Activated CD4-positive, alpha-beta T cell treated with anti-CD3 and anti-CD28 coated beads for 36 hours (primary cell): ENCODE measurements at regions of chr10 and their contacts with region 1.

Region 1: GRCh38 chr10:62816331-62817120 is at the start of gene EGR2:
- DNase-seq: peak; percentile 96
- ATAC-seq: peak; percentile 77
- H3K4me3 Mint-ChIP-seq: peak within 1 kb of the TSS; percentile 99
- H3K27ac Mint-ChIP-seq: peak within 1 kb of the TSS; percentile 99
- H3K4me1 Mint-ChIP-seq: peaks cover 46% of the 10 kb centered on the region
- H3K27me3 Mint-ChIP-seq: peaks cover 19% of the 10 kb centered on the region
- total RNA-seq, gene EGR2: 46.0 to 53.9 TPM

Region 2: GRCh38 chr10:61943674-61944410 is 872.7 kb before region 1 on chr10:
- CTCF ChIA-PET with region 1: no interaction called
- POLR2A ChIA-PET with region 1: no interaction called
- intact Hi-C with region 1: loop called in 1 of 2 experiments (anchors 1 kb)
- DNase-seq: peak; percentile 51
- ATAC-seq: peak; percentile 78
- H3K4me3 Mint-ChIP-seq: peak overlapping the region; percentile 59
- H3K27ac Mint-ChIP-seq: peak overlapping the region; percentile 98
- H3K4me1 Mint-ChIP-seq: peaks cover 71% of the 10 kb centered on the region
- H3K27me3 Mint-ChIP-seq: no peaks in the 10 kb centered on the region

Region 3: DNA sequence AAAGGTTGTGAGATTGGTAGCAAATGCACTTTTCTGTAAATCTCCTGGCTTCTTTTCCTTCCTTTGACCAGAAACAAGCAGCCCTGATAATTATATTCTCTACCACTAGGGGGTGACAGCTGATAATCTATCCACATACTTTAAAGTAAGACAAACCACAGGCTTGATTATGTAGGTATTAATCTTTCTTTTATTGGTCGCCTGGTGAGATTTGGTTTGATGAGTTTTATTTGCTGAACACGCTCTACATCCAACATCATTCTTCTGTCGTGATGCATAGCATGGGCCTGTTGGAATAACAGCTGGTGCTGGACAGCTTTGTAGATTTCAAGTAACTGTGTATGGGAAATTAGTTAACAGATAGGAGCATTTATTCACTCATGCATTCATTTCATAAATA is 378.8 kb before region 1 on chr10:
- CTCF ChIA-PET with region 1: interaction called, 3 read pairs
- POLR2A ChIA-PET with region 1: no interaction called
- intact Hi-C with region 1: loop called (anchors 2 to 5 kb)
- DNase-seq: no peak
- ATAC-seq: no peak
- H3K4me3 Mint-ChIP-seq: no peak overlapping the region
- H3K27ac Mint-ChIP-seq: no peak overlapping the region
- H3K4me1 Mint-ChIP-seq: peaks cover 19% of the 10 kb centered on the region
- H3K27me3 Mint-ChIP-seq: peaks cover 20% of the 10 kb centered on the region

Region 4: DNA sequence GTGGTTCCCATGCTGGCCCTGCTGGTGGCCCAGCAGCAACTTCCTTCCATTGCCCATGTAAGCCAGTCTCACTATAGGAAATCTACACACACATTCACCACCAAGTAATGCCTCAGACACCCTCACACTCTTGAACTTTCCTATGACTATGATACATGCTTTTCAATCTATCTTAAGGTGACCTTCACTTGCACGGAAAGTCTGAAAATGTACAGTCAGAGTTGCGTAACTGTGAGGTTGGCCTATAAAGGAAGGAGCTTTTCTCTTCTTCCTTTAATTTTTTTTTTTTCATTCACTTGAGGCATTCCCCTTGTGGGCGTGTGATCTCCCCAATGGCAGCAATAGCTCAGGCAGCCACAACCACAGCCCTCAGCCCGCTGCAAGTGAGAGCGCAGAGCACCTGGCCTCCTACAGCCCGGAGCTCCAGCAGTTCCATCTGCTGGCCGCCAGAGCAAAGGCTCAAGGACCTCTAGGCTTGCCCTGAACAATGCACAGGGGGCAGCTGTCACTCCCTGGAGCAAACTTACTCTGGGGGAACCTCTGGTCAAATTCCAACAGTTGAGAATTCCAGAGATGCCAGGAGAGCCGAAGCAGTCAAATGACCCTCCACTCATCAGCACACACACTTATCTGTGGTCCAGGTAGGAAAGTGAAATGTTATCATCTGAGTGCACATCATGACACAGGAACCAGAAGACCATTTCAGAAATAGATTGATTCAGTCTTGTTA is 135.2 kb before region 1 on chr10:
- CTCF ChIA-PET with region 1: interaction called, 21 read pairs
- POLR2A ChIA-PET with region 1: interaction called, 11 read pairs
- intact Hi-C with region 1: loop called (anchors 1 kb)
- DNase-seq: peak; percentile 94
- ATAC-seq: peak; percentile 94
- H3K4me3 Mint-ChIP-seq: peak overlapping the region; percentile 11
- H3K27ac Mint-ChIP-seq: peak overlapping the region; percentile 86
- H3K4me1 Mint-ChIP-seq: peaks cover 34% of the 10 kb centered on the region
- H3K27me3 Mint-ChIP-seq: peaks cover 7% of the 10 kb centered on the region

Region 5: DNA sequence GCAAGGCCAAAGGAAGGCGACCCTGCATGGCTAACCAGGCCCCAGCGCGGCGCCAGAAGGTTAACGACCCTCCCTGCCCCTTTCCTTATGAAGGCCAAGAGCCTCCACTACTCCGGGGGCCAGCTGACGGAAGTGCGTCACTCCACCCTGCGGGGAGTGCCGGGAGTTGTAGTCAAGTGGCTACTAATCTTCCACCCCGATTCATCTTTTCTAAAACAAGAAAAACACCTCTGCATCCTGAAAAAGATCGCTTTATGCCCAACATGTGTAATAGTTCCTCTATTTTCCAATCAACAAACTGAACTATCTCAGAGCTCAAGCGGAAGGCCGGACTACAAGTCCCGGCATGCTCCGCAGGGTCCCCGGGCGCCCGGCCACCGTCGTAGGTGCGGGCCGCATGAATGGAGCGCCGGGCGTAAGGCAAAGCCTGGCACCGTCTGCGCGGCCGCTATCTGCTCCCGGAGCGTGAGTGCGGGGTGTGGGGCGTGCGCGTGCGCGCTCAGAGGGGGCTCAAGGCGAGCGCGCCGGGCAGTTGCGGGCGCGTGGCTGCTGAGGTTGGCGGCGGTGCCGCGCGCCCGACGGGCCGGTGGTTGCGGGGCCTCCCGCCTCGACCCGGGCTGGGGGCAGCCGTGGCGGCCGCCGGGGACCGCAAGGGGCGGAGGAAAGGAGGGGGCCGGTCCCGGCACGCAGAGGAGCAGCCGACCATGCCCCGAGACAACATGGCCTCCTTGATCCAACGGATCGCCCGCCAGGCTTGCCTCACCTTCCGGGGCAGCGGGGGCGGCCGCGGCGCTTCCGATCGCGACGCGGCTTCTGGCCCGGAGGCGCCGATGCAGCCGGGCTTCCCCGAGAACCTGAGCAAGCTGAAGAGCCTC is 11.9 kb before region 1 on chr10 and contains the start of gene ADO:
- CTCF ChIA-PET with region 1: interaction called, 7 read pairs
- POLR2A ChIA-PET with region 1: interaction called, 12 read pairs
- intact Hi-C with region 1: loop called (anchors 1 kb)
- DNase-seq: peak; percentile 88
- ATAC-seq: peak; percentile 90
- H3K4me3 Mint-ChIP-seq: peak within 1 kb of the TSS; percentile 83
- H3K27ac Mint-ChIP-seq: peak within 1 kb of the TSS; percentile 99
- H3K4me1 Mint-ChIP-seq: peaks cover 33% of the 10 kb centered on the region
- H3K27me3 Mint-ChIP-seq: no peaks in the 10 kb centered on the region
- total RNA-seq, gene ADO: 21.5 to 23.2 TPM

Region 6: GRCh38 chr10:62880162-62880561 is 63.6 kb after region 1 on chr10:
- CTCF ChIA-PET with region 1: no interaction called
- POLR2A ChIA-PET with region 1: no interaction called
- intact Hi-C with region 1: no loop called
- DNase-seq: no peak
- ATAC-seq: no peak
- H3K4me3 Mint-ChIP-seq: no peak overlapping the region
- H3K27ac Mint-ChIP-seq: no peak overlapping the region
- H3K4me1 Mint-ChIP-seq: no peaks in the 10 kb centered on the region
- H3K27me3 Mint-ChIP-seq: peaks cover 39% of the 10 kb centered on the region

Region 7: DNA sequence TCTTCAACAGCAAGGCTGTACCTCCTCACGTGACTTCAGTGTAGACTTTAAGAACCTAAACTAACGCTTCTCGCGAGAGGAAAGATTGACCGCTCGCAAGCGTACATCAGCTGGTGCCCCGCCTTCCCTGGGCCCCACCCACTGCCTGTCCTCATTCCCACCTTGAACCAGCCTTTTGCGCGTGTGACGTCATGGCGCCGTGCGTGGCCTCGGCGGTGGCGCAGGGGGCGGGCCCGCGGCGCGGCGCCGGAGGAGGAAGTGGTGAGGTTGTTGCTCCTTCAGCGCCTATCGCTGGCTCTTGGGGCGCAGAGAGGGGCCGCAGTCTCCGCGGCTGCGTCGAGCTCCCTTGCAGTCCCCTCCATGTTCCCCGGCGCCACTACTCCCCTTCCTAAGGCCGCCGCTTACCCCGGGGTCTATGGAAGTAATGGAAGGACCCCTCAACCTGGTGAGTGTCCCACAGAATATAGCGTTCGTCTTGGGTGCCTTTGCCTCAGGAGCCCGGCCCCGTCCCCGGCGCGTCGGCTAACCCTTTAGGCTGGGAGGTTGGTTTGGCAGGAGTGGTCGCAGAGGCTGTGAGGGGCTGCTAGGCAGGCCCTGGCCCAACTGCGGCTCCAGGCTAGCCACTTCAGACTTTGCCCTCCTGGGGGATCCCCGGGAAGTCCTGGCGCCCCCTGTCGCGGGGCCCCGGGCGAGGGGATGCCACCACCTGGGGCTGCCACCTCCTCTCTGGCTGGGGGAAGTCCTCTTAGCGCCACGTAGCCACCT is 316.7 kb after region 1 on chr10 and contains the start of gene NRBF2:
- CTCF ChIA-PET with region 1: interaction called, 3 read pairs
- POLR2A ChIA-PET with region 1: interaction called, 3 read pairs
- intact Hi-C with region 1: loop called (anchors 1 kb)
- DNase-seq: peak; percentile 99
- ATAC-seq: peak; percentile 90
- H3K4me3 Mint-ChIP-seq: peak within 1 kb of the TSS; percentile 81
- H3K27ac Mint-ChIP-seq: peak within 1 kb of the TSS; percentile 92
- H3K4me1 Mint-ChIP-seq: peaks cover 46% of the 10 kb centered on the region
- H3K27me3 Mint-ChIP-seq: no peaks in the 10 kb centered on the region
- total RNA-seq, gene NRBF2: 23.9 to 24.1 TPM

Region 8: DNA sequence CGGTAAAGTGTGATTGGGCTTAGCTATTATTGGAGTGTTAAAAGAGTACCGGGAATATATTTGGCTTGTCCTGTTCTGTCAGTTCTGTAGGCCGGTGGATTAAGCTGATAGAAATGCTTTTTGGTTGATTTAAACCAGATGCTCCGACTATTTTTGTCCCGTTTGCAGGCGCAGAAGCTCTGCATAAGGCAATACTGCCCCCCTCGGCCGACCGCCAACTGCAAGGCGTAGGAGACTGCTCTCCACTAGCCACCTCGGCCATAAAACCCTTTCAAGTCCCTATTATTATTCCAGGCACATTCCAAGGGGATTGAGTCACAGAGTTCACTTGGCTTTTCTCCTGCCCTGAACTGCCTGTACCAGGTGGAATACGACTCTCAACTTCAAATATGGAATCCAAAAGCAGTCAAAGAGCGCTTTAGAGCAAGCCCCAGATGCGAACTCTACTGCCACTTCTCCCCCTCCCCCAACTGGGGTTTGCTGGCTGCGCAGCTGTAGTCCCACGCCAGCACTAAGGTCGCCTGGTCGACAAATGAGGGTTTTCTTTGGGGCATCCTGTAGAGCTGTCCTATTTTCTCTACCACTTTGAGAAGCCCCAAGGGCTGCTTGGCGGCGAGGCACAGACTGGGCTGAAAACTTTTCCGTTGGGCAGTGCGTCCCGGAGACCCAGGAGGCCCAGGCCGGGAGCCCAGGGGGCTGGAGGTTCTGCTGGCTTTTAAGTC is 813.0 kb after region 1 on chr10:
- CTCF ChIA-PET with region 1: interaction called, 3 read pairs
- POLR2A ChIA-PET with region 1: no interaction called
- intact Hi-C with region 1: loop called in 1 of 2 experiments (anchors 5 kb)
- DNase-seq: peak; percentile 92
- ATAC-seq: peak; percentile 72
- H3K4me3 Mint-ChIP-seq: peak overlapping the region; percentile 80
- H3K27ac Mint-ChIP-seq: peak overlapping the region; percentile 86
- H3K4me1 Mint-ChIP-seq: peaks cover 25% of the 10 kb centered on the region
- H3K27me3 Mint-ChIP-seq: no peaks in the 10 kb centered on the region